ENCODE measurements at regions of chr7 and their contacts with region 1.

Region 1: GRCh38 chr7:114865564-114865963 is 56.3 kb upstream of the MDFIC start:
- DNase-seq: peak; percentile 64
- H3K4me3 Mint-ChIP-seq: no peak overlapping the region
- H3K27ac Mint-ChIP-seq: no peak overlapping the region
- H3K4me1 Mint-ChIP-seq: no peaks in the 10 kb centered on the region
- H3K27me3 Mint-ChIP-seq: no peaks in the 10 kb centered on the region

Region 2: DNA sequence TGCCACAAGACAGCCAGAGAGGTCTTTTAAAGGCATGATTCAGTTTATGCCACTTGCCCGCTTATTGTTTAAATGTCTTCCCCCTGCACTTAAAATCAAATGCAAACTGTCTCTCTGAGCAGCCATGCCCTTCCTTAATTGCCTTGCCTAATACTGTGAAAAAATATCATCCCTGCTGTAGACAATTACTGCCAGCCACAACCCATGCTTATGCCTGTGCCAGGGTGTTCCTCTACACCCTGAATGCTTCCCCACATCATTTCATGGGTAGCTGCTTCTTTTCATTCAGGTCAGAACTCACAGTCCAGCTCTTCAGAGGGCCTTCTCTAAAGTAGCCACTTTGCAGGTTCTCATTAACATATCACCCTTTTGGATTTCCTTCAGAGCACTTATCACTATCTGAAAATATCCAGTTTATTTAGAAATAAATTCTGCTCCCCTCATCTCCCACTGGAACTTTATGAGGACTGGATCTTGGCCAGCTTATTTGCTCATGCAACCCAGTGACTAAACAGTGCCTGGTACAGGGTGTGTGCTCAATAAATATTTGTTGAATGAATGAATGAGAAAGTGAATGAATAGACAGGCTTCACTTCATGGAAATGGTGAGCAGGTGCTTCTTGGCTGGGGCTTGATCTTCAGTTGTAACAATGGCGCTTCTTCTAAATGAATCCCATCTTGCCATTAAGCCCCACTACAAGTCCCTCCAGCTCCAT is 106.1 kb before region 1 on chr7:
- CTCF ChIA-PET with region 1: no interaction called
- POLR2A ChIA-PET with region 1: no interaction called
- DNase-seq: no peak
- H3K4me3 Mint-ChIP-seq: no peak overlapping the region
- H3K27ac Mint-ChIP-seq: no peak overlapping the region
- H3K4me1 Mint-ChIP-seq: no peaks in the 10 kb centered on the region
- H3K27me3 Mint-ChIP-seq: no peaks in the 10 kb centered on the region

Region 3: DNA sequence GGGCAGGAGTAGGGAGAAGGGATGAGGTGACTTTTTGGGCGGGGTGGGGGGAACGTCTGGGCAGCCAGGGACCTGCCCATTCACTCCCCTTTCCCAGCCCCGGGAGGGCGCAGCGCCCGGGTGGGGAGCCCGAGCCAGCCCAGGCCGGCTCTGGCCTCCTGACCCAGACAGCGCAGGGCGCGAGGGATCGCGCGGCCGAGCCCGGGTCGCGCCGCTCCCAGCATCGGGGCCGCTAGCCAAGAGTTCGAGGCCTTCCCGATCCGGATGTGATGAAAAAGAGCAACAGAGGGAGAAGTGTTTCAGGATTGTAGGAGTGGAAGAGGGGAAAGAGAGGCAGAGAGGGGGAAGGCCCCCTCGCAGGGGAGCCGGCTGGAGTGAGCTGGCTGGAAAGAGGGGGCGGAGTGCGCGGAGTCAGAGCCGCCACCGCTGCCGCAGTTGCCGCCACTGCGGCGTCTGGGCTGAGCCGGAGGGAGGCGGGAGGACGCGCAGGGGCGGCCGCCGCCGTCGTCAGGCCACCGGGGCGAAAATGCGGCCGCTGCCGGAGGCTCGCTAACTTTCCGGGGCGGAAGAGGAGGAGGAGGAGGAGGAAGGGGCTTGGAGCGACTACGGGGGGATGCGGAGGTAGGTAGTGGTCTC is 56.6 kb after region 1 on chr7 and contains the start of gene MDFIC:
- CTCF ChIA-PET with region 1: interaction called, 25 read pairs
- POLR2A ChIA-PET with region 1: interaction called, 11 read pairs
- DNase-seq: peak; percentile 69
- H3K4me3 Mint-ChIP-seq: peak within 1 kb of the TSS; percentile 99
- H3K27ac Mint-ChIP-seq: peak within 1 kb of the TSS; percentile 99
- H3K4me1 Mint-ChIP-seq: peaks cover 51% of the 10 kb centered on the region
- H3K27me3 Mint-ChIP-seq: no peaks in the 10 kb centered on the region
- total RNA-seq, gene MDFIC: 85.8 to 90.7 TPM

Region 4: DNA sequence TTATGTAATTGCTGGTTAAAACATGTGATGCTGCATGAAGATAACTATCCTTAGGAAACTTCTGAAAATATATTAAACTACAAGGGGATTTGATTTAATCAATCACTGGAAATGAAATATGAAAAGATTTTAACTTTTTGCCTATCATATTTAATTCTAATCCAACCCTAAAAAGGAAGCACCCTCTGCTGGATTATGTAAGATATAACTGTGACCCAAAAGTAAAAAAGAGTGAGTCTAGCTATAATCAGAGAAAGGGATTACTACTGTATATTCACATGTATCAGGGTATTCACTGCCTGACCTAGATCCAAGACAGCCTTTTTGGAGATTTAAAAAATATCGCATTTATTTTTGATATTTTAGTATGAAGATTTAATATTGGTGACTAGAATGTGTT is 351.8 kb after region 1 on chr7:
- CTCF ChIA-PET with region 1: interaction called, 37 read pairs
- POLR2A ChIA-PET with region 1: no interaction called
- DNase-seq: no peak
- H3K4me3 Mint-ChIP-seq: no peak overlapping the region
- H3K27ac Mint-ChIP-seq: no peak overlapping the region
- H3K4me1 Mint-ChIP-seq: peaks cover 7% of the 10 kb centered on the region
- H3K27me3 Mint-ChIP-seq: no peaks in the 10 kb centered on the region

Region 5: GRCh38 chr7:115679976-115680375 is 814.4 kb after region 1 on chr7:
- CTCF ChIA-PET with region 1: interaction called, 10 read pairs
- POLR2A ChIA-PET with region 1: no interaction called
- DNase-seq: no peak
- H3K4me3 Mint-ChIP-seq: no peak overlapping the region
- H3K27ac Mint-ChIP-seq: no peak overlapping the region
- H3K4me1 Mint-ChIP-seq: no peaks in the 10 kb centered on the region
- H3K27me3 Mint-ChIP-seq: no peaks in the 10 kb centered on the region